Activated T-helper 2 cell treated with anti-CD3 and anti-CD28 coated beads, Interferon-gamma antibody, Interleukin-2, Interleukin-4, amounts not matched to agents 10 μg/mL and 5 μg/mL and 100 μg/mL, durations not matched to agents 14 hours and 24 hours and 36 hours (primary cell): ENCODE measurements at regions of chr6 and their contacts with region 1.

Region 1: DNA sequence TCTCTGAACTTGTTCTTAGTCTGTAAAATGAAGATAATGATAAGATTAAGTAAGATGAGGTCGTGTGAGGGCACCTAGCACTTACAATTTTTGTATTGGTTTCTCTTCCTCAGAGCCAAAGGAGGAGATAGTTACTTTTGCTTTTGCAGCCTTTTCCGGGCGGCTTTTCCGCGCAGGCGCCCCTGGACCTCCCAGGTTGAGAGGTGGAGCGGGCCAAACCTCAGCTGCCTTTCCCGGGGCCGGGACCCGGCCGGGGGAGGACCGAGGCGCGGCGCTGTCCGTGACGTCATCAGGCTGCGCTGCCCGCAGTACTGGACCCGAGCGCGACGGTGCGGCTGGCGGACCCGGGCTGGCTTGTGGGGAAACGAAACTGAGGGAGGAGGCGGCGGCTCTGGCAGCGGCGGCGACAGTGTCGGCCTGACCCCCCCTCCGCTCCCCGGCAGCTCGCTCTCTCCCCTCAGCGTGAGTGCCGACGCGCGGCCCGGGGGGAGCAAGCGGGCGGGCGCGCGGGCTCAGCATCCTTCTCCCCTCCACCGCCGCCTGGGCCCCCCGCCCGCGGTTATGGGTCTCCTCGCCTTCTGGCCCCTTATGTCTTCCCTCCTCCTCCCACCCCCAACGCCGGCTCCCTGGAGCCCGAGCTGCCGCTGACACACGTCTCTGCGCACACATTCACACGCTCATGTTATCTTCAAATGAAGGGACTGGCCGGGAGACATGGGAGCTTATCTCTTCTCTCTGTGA is at the start of gene CMTR1:
- DNase-seq: peak; percentile 99
- H3K4me3 Mint-ChIP-seq: peak within 1 kb of the TSS; percentile 95
- H3K27ac Mint-ChIP-seq: peak within 1 kb of the TSS; percentile 99
- H3K4me1 Mint-ChIP-seq: peaks cover 30% of the 10 kb centered on the region
- H3K27me3 Mint-ChIP-seq: peaks cover 2% of the 10 kb centered on the region
- total RNA-seq, gene CMTR1: 51.8 and 55.6 TPM in 2 replicates

Region 2: GRCh38 chr6:37353761-37354525 is 79.1 kb before region 1 on chr6 and contains the start of gene RNF8:
- intact Hi-C with region 1: no loop called
- DNase-seq: peak; percentile 88
- H3K4me3 Mint-ChIP-seq: peak within 1 kb of the TSS; percentile 93
- H3K27ac Mint-ChIP-seq: peak within 1 kb of the TSS; percentile 84
- H3K4me1 Mint-ChIP-seq: peaks cover 22% of the 10 kb centered on the region
- H3K27me3 Mint-ChIP-seq: no peaks in the 10 kb centered on the region
- total RNA-seq, gene RNF8: 28.5 and 32.0 TPM in 2 replicates

Region 3: DNA sequence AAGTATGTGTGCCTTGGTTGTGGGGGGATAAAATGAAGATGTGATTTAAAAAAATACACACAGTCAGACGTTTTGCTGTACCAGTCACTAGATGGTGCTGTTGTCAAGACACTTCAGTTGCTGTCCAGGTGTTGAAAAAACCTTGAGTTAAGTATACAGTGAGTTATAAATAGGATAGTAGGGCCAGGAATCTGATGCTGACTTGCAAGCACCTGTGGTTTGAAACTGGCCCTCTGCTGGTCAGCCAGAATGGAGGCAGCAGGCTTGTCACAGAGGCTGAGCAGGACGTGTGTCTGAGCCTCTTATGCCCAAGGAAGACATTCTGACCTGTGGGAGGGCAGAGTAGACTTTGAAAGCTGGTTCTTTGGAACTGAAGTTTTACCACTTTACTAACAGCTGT is 51.5 kb before region 1 on chr6:
- intact Hi-C with region 1: loop called (anchors 10 kb)
- DNase-seq: no peak
- H3K4me3 Mint-ChIP-seq: no peak overlapping the region
- H3K27ac Mint-ChIP-seq: no peak overlapping the region
- H3K4me1 Mint-ChIP-seq: no peaks in the 10 kb centered on the region
- H3K27me3 Mint-ChIP-seq: no peaks in the 10 kb centered on the region

Region 4: DNA sequence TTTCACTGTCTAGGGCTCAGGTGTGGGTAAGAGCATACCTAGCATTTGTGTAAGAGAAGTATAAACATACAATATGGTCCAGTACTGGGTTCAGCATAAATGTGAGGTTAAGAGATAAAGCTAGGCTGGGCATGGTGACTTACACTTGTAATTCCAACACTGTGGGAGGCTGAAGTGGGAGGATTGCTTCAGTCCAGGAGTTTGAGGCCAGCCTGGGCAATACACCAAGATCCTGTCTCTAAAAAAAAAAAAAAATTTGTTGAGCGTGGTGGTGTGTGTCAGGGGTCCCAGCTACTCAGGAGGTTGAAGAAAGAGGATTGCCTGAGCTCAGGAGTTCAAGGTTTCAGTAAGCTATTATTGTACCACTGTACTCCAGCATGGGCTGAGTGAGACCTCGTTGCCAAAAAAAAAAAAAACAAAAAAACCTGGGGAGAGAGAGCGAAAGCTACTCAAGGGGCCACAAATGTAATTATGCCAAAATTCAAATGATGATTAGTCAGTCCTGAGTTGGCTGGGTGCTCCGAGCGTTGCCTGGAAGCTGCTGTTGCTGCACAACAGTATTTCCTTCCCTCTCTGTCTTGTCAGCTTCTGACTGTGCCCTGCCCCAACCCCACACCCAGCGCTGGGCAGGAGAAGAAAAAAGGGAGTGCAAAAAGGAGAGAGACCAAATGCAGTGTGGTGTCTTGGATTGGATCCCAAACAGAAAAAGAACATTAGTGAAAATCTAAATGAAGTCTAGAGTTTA is 23.9 kb after region 1 on chr6:
- intact Hi-C with region 1: no loop called
- DNase-seq: no peak
- H3K4me3 Mint-ChIP-seq: no peak overlapping the region
- H3K27ac Mint-ChIP-seq: no peak overlapping the region
- H3K4me1 Mint-ChIP-seq: peaks cover 9% of the 10 kb centered on the region
- H3K27me3 Mint-ChIP-seq: no peaks in the 10 kb centered on the region

Region 5: DNA sequence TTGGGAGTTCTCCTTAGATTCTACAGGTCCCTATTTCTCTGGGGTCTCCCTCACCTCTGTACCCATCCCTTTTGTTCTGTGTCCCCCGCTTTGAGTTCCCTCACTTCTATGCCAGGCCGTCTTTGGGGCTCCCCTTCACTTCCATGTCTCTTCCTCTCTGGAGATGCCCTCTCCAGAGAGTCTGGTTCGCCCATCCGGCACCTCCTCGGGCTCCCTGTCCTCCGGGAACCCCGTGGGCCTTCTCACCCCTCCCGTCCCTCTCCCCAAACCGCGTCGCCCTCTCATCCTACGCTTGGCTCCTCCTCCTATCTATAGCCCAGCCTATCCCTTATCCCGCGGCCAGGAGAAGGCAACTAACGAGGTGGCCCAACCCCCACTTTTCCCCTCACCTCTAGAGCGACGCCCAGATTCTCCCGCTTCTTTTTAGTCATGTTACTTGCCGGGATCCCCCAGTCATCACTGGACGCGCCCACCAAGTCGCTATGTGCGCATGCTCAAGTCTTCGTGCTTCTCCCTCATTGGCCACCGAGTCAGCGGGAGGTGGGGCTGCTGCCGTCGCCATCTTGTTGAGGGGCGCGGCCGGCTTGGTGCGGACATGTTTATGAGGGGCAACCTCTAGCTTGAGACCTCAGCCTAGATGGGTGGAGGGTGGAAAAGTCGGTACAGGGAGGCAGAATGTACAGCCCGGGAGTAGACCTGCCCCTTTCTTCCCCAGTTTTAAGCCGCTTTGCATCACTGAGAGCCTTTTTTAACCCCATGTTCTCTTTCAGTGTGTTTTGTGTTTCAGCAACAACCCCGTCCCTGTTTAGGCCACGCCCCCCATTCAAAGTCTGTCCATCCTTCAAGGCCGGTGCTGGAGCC is 66.6 kb after region 1 on chr6 and contains the start of gene CCDC167:
- intact Hi-C with region 1: loop called (anchors 5 kb)
- DNase-seq: peak; percentile 96
- H3K4me3 Mint-ChIP-seq: peak within 1 kb of the TSS; percentile 93
- H3K27ac Mint-ChIP-seq: peak within 1 kb of the TSS; percentile 96
- H3K4me1 Mint-ChIP-seq: peaks cover 64% of the 10 kb centered on the region
- H3K27me3 Mint-ChIP-seq: no peaks in the 10 kb centered on the region
- total RNA-seq, gene CCDC167: 69.8 and 76.9 TPM in 2 replicates

Region 6: GRCh38 chr6:37691904-37692806 is 259.1 kb after region 1 on chr6:
- intact Hi-C with region 1: loop called (anchors 5 kb)
- DNase-seq: peak; percentile 64
- H3K4me3 Mint-ChIP-seq: no peak overlapping the region
- H3K27ac Mint-ChIP-seq: no peak overlapping the region
- H3K4me1 Mint-ChIP-seq: peaks cover 22% of the 10 kb centered on the region
- H3K27me3 Mint-ChIP-seq: peaks cover 45% of the 10 kb centered on the region